ENCODE measurements at regions of chr12 and their contacts with region 1.

Region 1: DNA sequence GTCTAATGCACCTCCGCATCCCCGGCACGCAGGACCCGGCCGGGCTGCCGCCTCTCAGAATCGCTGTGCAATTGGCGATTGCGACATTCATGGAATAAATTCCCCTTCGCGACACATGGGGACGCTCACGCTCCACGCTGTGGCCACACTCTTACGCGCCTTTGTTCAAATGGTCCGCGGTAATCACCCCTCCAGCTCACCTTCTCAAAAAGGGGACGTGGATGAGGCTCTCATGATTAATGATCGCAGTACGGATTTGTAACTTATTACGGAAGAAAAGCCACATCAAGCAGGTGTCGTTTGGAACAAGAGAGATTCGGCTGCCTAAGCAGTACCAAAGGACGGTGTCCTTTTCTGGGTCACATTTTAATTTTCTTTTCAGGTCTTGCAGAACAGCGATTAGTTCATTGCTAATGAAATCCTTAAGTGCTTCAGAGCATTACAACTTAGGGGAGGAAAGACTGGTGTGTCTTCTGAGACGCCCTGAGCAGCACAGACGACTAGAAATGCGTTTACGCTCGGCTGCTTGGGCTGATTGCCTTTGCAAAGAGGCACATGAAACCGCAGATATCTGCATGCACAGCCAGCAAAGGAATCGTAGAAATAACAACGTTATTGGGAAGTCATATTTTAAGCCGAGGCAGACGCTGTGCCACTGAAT is 37.3 kb upstream of the ADGRD1 start:
- DNase-seq: peak; percentile 53 to 66
- H3K4me3 ChIP-seq: no peak overlapping the region
- H3K4me3 Mint-ChIP-seq: peak overlapping the region; percentile 22
- H3K27ac Mint-ChIP-seq: no peak overlapping the region
- H3K4me1 ChIP-seq: no peaks in the 10 kb centered on the region
- H3K4me1 Mint-ChIP-seq: peaks cover 7% of the 10 kb centered on the region
- H3K27me3 ChIP-seq: no peaks in the 10 kb centered on the region
- H3K27me3 Mint-ChIP-seq: peaks cover 18% of the 10 kb centered on the region
- CTCF ChIP-seq: peak; percentile 93

Region 2: DNA sequence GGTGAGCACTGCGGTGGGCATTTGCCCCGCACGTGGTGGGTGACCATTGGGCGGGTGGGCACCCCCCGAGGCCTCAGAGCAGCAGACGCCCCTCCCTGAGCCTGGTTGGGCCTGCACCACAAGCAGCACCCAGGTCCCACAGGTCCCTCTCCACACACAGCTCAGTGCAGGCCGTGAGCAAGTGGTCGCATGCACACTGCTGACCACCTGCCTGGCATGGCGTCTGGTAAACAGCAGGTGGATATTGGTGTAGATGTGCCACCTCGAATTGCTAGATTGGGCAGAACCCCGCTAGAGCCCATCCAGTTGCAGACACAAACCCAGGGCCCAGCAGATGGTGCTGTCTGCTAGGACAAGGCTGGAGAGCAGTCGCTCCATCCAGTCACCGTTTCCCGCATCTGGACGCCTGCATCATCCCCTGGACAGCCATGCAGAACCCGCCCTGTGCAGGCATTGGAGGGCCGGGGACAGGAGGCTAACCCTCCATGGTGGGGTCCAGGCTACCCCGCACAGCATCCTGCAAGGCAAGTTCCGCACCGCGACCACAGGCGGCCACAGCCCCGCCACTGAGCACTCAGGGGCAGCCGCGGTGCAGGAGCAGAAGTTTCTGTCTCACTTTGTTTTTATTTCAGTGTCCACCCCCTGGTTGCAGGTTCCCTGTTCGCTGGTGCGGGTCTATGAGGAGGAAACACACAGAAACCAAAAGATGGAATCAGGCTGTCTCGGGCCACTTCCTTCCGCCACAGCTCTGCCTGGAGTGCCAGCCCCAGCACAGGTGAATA is 154.7 kb before region 1 on chr12:
- CTCF ChIA-PET with region 1: no interaction called
- POLR2A ChIA-PET with region 1: no interaction called
- intact Hi-C with region 1: loop called (anchors 2 kb)
- DNase-seq: peak; percentile 72 to 76
- H3K4me3 ChIP-seq: no peak overlapping the region
- H3K4me3 Mint-ChIP-seq: no peak overlapping the region
- H3K27ac Mint-ChIP-seq: no peak overlapping the region
- H3K4me1 ChIP-seq: peaks cover 5% of the 10 kb centered on the region; the same call in 1 of the 2 replicates
- H3K4me1 Mint-ChIP-seq: no peaks in the 10 kb centered on the region
- H3K27me3 ChIP-seq: no peaks in the 10 kb centered on the region
- H3K27me3 Mint-ChIP-seq: no peaks in the 10 kb centered on the region
- CTCF ChIP-seq: peak; percentile 68 to 77

Region 3: DNA sequence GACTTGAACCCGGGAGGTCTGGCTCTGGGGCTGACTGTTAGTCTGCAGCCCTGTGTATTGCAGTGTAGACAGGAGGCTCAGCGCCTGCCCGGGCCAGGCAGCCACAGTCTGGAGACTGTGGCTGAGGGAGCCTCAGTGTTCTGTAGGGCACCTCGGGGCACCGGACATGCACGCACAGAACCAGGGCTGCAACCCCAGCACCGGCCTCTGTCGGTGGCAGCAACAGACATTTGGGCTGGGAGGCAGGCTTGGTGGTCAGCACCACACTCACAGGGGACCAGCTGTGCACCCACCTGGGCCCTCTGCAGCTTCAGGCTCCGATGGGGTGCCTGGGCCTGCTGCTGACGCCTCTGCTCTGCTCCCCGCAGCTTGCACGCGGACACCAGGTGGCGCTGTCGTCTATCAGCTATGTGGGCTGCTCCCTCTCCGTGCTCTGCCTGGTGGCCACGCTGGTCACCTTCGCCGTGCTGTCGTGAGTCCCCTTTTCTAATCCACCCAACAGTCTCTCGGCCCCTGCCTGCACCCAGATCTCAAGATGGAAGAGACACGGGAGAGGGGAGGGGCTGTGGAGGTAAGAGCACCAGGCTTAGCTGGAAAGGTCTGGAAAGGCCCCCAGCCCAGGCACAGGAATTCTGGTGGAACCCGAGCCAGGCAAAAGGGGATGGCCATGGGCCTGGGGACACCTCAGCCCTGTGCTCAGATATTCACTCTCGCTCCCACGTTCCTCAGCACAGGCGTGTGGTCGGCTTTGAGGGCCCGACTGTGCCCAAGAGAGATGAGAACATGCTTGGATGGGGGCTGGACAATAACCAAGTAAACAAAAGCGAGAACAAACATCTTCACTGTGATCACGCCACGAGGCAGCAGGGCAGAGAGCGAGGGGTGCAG is 188.3 kb after region 1 on chr12:
- CTCF ChIA-PET with region 1: no interaction called
- POLR2A ChIA-PET with region 1: no interaction called
- intact Hi-C with region 1: loop called (anchors 1 kb)
- DNase-seq: peak; percentile 82 to 88
- H3K4me3 ChIP-seq: no peak overlapping the region
- H3K4me3 Mint-ChIP-seq: no peak overlapping the region
- H3K27ac Mint-ChIP-seq: no peak overlapping the region
- H3K4me1 ChIP-seq: no peaks in the 10 kb centered on the region
- H3K4me1 Mint-ChIP-seq: no peaks in the 10 kb centered on the region
- H3K27me3 ChIP-seq: no peaks in the 10 kb centered on the region
- H3K27me3 Mint-ChIP-seq: no peaks in the 10 kb centered on the region
- CTCF ChIP-seq: peak; percentile 94

Region 4: DNA sequence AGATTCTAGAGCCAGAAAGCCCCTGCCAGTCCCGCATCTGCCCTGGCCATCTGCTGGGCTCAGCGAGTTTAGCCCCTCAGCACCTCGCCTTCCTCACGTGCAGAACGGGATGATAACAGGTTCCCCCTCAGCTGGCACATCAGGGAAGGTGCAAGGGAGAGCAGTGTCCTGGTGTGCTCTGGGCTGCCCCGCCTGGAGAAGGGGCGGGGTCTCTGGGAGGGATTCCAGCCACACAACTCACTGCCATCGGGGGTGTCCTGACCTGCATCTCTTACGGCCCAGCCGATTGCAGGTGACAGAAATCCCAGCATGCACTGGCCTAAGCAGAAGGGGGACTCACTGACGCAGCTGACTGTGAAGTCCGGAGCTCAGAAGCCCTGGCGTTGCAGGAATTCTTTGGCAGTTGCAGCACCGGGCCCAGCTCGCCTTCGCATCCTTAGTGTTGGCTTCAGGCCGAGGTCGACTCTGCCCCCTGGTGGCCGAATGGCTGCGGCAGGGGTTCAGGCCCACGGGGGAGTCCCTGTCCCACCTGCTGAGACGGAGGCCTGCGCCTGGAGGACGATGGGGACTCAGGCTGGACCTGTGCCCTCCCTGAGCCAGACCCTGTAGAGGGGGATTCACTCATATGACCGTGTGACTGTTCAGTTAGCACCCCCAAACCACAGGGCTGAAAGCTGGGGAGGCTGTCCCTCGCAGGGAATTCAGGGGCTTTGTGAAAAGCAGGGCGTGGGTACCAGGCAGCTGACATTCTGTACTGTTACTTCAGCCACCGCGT is 215.9 kb after region 1 on chr12:
- CTCF ChIA-PET with region 1: interaction called, 28 read pairs
- POLR2A ChIA-PET with region 1: no interaction called
- intact Hi-C with region 1: loop called (anchors 1 kb)
- DNase-seq: peak; percentile 78 to 87
- H3K4me3 ChIP-seq: no peak overlapping the region
- H3K4me3 Mint-ChIP-seq: no peak overlapping the region
- H3K27ac Mint-ChIP-seq: no peak overlapping the region
- H3K4me1 ChIP-seq: no peaks in the 10 kb centered on the region
- H3K4me1 Mint-ChIP-seq: no peaks in the 10 kb centered on the region
- H3K27me3 ChIP-seq: no peaks in the 10 kb centered on the region
- H3K27me3 Mint-ChIP-seq: peaks cover 7% of the 10 kb centered on the region
- CTCF ChIP-seq: peak; percentile 77 to 80

Region 5: GRCh38 chr12:131454418-131455217 is 538.2 kb after region 1 on chr12:
- CTCF ChIA-PET with region 1: no interaction called
- POLR2A ChIA-PET with region 1: no interaction called
- intact Hi-C with region 1: loop called (anchors 5 kb)
- DNase-seq: peak; percentile 66 to 71
- H3K4me3 ChIP-seq: no peak overlapping the region
- H3K4me3 Mint-ChIP-seq: no peak overlapping the region
- H3K27ac Mint-ChIP-seq: no peak overlapping the region
- H3K4me1 ChIP-seq: no peaks in the 10 kb centered on the region
- H3K4me1 Mint-ChIP-seq: no peaks in the 10 kb centered on the region
- H3K27me3 ChIP-seq: no peaks in the 10 kb centered on the region
- H3K27me3 Mint-ChIP-seq: peaks cover 18% of the 10 kb centered on the region
- CTCF ChIP-seq: peak; percentile 72 to 75